ENCODE measurements at regions of chr5 and their contacts with region 1.

Region 1: DNA sequence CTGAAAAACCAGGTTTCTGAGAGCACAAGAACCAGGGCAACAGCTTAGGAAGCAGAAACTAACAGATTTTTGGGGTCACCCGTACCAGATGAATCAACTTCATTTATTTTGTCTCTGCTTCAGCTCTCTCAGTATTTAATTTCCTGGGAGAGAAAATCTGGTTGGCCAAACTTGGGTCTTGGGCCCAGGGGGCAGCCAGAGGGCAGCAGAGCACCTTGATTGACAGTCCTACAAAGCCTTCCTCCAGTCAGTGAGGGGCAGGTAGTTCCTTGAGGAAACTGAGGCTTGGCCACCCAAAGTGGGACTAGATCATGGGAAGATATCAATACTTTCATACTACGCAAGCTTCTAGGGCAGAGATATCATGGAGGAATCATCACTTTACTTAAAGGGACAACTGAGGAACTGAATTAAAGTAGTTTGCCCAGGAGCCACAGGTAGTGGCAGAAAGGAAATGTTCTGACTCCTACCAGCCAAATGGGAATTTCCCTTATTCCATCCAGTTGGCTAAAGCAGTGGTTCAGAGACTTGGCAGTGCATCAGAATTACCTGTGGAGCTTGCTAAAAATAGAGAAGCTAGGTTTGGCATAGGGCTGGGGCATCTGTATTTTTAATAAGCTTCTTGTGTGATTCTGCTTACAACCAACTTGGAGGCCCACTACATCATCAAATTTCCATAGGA is 21.5 kb upstream of the ARHGAP26 start:
- DNase-seq: peak; percentile 42 to 79
- ATAC-seq: peak; percentile 64 to 82 (median 66)
- H3K4me3 ChIP-seq: no peak overlapping the region
- H3K4me3 Mint-ChIP-seq: no peak overlapping the region
- H3K27ac ChIP-seq: no peak overlapping the region
- H3K27ac Mint-ChIP-seq: no peak overlapping the region
- H3K4me1 ChIP-seq: peaks cover 3% of the 10 kb centered on the region
- H3K4me1 Mint-ChIP-seq: peaks cover 14 to 23% of the 10 kb centered on the region in 2 donors
- H3K27me3 ChIP-seq: no peaks in the 10 kb centered on the region
- H3K27me3 Mint-ChIP-seq: no peaks in the 10 kb centered on the region
- CTCF ChIP-seq: peak; percentile 74

Region 2: GRCh38 chr5:142872795-142873194 is 124.1 kb after region 1 on chr5:
- intact Hi-C with region 1: loop called (anchors 1 kb)
- DNase-seq: no peak
- ATAC-seq: no peak
- H3K4me3 ChIP-seq: no peak overlapping the region
- H3K4me3 Mint-ChIP-seq: no peak overlapping the region
- H3K27ac ChIP-seq: no peak overlapping the region
- H3K27ac Mint-ChIP-seq: no peak overlapping the region
- H3K4me1 ChIP-seq: no peaks in the 10 kb centered on the region
- H3K4me1 Mint-ChIP-seq: peaks cover 30 to 45% of the 10 kb centered on the region in 2 donors
- H3K27me3 ChIP-seq: no peaks in the 10 kb centered on the region
- H3K27me3 Mint-ChIP-seq: no peaks in the 10 kb centered on the region
- CTCF ChIP-seq: no peak

Region 3: DNA sequence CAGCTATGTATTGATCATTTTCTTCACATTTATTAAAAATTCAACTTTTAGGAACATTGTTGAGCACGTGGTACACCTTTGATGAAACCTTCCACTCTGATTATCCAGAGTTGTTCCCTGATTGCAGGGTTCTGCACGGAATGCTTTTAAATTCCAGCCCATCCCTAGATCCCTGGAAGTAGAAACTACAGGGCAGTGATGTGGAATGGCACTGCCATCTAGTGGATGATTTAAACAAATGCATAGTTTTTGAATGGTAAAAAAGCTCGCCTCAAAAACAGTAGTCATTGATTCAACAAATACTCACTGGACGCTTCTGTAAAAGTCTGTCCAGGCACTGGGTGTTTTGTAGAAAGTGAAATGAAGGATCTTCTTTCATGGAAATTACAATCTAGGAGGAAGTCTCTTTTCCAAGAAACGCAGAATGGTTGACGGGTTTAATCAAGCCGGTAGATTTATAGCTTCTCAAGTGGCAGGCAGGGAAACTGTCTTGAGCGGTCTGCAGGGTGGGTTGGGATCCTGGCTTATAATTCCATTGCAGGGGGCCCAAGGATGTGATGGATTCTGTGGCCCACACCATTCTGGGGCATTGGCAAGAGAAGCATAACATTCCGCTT is 139.9 kb after region 1 on chr5:
- intact Hi-C with region 1: loop called (anchors 2 kb)
- DNase-seq: peak in 1 of 2 donors; percentile 60
- ATAC-seq: peak in 2 of 3 donors; percentile 54 to 62
- H3K4me3 ChIP-seq: no peak overlapping the region
- H3K4me3 Mint-ChIP-seq: no peak overlapping the region
- H3K27ac ChIP-seq: no peak overlapping the region
- H3K27ac Mint-ChIP-seq: no peak overlapping the region
- H3K4me1 ChIP-seq: peaks cover 2% of the 10 kb centered on the region
- H3K4me1 Mint-ChIP-seq: peaks cover 53 to 58% of the 10 kb centered on the region in 2 donors
- H3K27me3 ChIP-seq: no peaks in the 10 kb centered on the region
- H3K27me3 Mint-ChIP-seq: no peaks in the 10 kb centered on the region
- CTCF ChIP-seq: peak; percentile 79